A549 (cell line): ENCODE measurements at regions of chr12 and their contacts with region 1.

Region 1: DNA sequence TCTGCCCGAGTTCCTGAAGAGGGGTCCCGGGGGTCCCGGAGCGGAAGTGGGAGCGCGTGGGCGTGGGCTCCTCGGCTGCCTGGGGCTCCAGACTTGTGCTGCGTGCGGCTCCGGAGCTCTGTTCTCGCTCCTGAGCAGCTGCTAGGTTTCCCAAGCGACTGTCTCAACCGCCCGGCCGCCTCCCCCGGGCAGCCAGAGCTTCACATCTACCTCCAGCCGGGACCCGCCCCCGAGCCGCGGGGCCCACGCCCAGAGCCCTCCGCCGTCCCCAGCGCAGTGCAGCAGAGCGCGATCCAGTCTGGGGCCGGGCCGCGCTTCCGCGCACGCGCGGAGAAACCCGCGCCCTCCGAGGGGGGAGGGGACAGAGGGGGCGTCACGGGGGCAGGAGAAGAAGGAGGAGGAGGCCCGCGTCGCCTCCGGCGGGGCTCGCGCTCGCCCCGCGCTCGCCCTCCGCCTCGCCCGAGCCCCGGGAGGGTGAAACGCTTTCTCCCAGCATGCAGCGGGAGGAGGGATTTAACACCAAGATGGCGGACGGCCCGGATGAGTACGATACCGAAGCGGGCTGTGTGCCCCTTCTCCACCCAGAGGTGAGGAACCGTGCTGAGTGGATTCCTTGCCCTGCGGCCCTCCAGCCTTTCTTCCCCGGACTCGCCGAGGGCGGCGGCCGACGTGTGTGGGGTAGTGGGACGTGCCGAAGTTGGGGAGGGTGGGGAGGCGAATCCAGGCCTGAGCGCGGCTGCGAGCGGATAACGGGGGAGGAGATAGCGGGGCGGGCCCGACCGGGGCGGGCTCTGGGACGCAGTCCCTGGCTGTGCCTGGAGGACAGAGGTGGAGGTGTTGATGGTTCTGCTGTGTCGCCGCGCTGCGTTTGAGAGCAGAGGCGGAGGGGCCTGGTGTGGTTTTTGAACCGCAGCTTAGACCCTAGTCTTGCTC is at the start of gene ZDHHC17:
- DNase-seq: peak; percentile 75 to 96
- ATAC-seq: peak; percentile 95 to 96
- H3K4me3 ChIP-seq: peak within 1 kb of the TSS; percentile 72
- H3K27ac ChIP-seq: peak within 1 kb of the TSS; percentile 96 to 97
- H3K4me1 ChIP-seq: 0 out of 3 replicates have a peak, but pooled peaks cover 14% of the 10 kb centered on the region
- CTCF ChIP-seq: no peak
- EP300 ChIP-seq: no peak
- POLR2A ChIP-seq: peak; percentile 95
- RAD21 ChIP-seq: no peak; a peak in 1 of 5 replicates
- polyA plus RNA-seq, gene ZDHHC17: 49.2 and 54.8 TPM in 2 replicates

Region 2: DNA sequence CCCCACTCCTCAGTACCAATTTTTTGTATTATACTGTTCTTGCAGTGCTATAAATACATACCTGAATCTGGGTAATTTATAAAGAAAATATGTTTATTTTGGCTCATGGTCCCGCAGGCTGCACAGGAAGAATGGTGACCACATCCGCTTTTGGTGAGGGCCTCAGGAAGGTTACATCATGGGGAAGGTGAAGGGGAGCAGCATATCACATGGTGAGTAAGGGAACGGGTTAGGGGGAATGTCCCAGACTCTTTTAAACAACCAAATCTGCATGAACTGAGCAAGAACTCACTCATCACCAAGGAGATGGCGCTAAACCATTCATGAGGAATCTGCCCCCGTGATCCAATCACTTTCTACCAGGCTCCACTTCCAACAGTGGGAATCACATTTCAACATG is 244.5 kb before region 1 on chr12:
- CTCF ChIA-PET with region 1: no interaction called
- POLR2A ChIA-PET with region 1: no interaction called
- DNase-seq: no peak
- ATAC-seq: no peak
- H3K4me3 ChIP-seq: no peak overlapping the region
- H3K27ac ChIP-seq: no peak overlapping the region
- H3K4me1 ChIP-seq: no peaks in the 10 kb centered on the region
- CTCF ChIP-seq: no peak
- EP300 ChIP-seq: no peak
- POLR2A ChIP-seq: no peak
- RAD21 ChIP-seq: no peak

Region 3: GRCh38 chr12:76720068-76720467 is 43.9 kb before region 1 on chr12:
- CTCF ChIA-PET with region 1: interaction called, 3 read pairs
- POLR2A ChIA-PET with region 1: interaction called, 10 read pairs
- DNase-seq: peak in 1 of 2 experiments; percentile 73
- ATAC-seq: peak; percentile 84 to 96
- H3K4me3 ChIP-seq: no peak overlapping the region
- H3K27ac ChIP-seq: peak overlapping the region; percentile 59 to 80
- H3K4me1 ChIP-seq: peaks cover 29% of the 10 kb centered on the region
- CTCF ChIP-seq: no peak
- EP300 ChIP-seq: peak; percentile 40; a peak in 2 of 5 replicates
- POLR2A ChIP-seq: no peak
- RAD21 ChIP-seq: peak in 1 of 2 experiments; percentile 4; a peak in 1 of 5 replicates

Region 4: GRCh38 chr12:76820888-76821482 is 57.0 kb after region 1 on chr12:
- CTCF ChIA-PET with region 1: no interaction called
- POLR2A ChIA-PET with region 1: no interaction called
- DNase-seq: peak; percentile 39 to 52
- ATAC-seq: peak; percentile 78 to 91; a peak in 5 of 6 replicates
- H3K4me3 ChIP-seq: no peak overlapping the region
- H3K27ac ChIP-seq: no peak overlapping the region
- H3K4me1 ChIP-seq: no peaks in the 10 kb centered on the region
- CTCF ChIP-seq: peak; percentile 64
- EP300 ChIP-seq: no peak
- POLR2A ChIP-seq: no peak
- RAD21 ChIP-seq: peak; percentile 53 to 67; a peak in 4 of 5 replicates